ENCODE measurements at regions of chr7 and their contacts with region 1.

Region 1: DNA sequence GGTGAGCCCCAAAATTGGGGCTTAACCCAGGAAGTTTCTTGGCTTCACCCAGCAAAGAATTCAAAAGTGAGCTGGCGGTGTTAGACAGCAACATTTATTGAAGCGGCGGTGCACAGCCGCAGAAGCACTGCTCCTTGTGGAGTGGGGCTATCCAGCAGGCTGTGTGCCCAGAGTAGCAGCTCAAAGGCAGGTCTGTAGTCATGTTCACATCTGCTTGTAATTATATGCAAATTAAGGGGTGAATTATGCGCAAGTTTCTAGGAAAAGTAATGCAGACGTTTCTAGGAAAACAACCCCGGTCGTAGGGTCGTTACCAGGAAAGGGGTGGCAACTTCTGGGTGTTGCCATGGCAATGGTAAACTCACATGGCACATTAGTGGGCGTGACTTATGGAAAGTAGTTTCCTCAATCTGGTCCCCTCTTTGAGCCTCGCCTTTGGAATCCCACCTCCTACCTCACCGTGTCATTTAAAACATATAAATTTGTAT is 13.7 kb upstream of the KBTBD2 start:
- DNase-seq: peak; percentile 85 to 93
- H3K4me3 ChIP-seq: peak overlapping the region; percentile 66
- H3K27ac ChIP-seq: peak overlapping the region; percentile 39
- H3K4me1 ChIP-seq: peaks cover 9% of the 10 kb centered on the region; the same call in 1 of the 2 replicates
- H3K27me3 ChIP-seq: no peaks in the 10 kb centered on the region
- CTCF ChIP-seq: no peak

Region 2: DNA sequence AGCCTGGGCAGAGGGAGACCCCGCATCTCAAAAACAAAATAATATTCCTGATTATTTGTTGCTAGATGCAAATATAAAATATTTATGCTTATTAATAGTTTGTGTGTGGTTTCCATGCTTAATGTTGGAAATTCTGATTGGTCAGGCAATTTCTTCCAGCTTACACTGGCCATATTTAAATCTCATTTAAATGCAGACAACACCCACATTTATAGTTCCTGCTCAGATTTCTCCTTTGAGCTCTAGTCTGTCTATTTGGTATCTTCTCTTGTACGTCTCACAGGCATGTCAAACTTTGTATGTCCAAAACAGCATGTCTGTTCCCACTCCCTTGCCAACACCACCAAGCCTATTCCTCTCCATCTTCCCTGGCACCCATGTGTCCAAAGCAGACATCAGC is 104.5 kb after region 1 on chr7:
- CTCF ChIA-PET with region 1: no interaction called
- POLR2A ChIA-PET with region 1: interaction called, 10 read pairs
- intact Hi-C with region 1: no loop called
- DNase-seq: no peak
- H3K4me3 ChIP-seq: no peak overlapping the region
- H3K27ac ChIP-seq: no peak overlapping the region
- H3K4me1 ChIP-seq: no peaks in the 10 kb centered on the region
- H3K27me3 ChIP-seq: no peaks in the 10 kb centered on the region
- CTCF ChIP-seq: no peak

Region 3: DNA sequence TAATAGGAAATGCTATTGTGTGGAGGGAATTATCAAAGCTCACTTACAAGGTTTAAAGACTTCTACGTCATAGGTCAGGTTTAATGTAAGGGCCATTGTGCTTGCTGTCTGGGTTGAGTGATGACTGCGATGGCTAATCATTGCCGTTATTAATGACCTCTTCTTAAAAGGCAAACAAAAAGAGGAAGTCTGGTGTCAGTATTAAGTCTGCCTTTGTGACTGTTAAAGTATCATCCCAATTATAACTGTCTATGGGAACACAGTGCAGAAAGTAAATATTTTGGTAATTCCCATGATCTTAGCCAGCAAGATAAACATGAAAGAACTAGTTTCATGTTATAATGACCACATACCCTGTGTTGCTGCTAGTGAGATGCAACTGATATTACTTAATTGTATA is 606.6 kb after region 1 on chr7:
- CTCF ChIA-PET with region 1: no interaction called
- POLR2A ChIA-PET with region 1: interaction called, 11 read pairs
- intact Hi-C with region 1: no loop called
- DNase-seq: no peak
- H3K4me3 ChIP-seq: no peak overlapping the region
- H3K27ac ChIP-seq: no peak overlapping the region
- H3K4me1 ChIP-seq: no peaks in the 10 kb centered on the region
- H3K27me3 ChIP-seq: no peaks in the 10 kb centered on the region
- CTCF ChIP-seq: no peak

Measured in PC-9 (cell line).